Naive thymus-derived CD4-positive, alpha-beta T cell (primary cell): ENCODE measurements at regions of chr2 and their contacts with region 1.

Region 1: GRCh38 chr2:119243621-119244020 is 20.0 kb downstream of the STEAP3 start:
- DNase-seq: no peak
- ATAC-seq: no peak
- H3K4me3 ChIP-seq: no peak overlapping the region
- H3K4me3 Mint-ChIP-seq: no peak overlapping the region
- H3K27ac ChIP-seq: no peak overlapping the region
- H3K27ac Mint-ChIP-seq: no peak overlapping the region
- H3K4me1 ChIP-seq: no peaks in the 10 kb centered on the region
- H3K4me1 Mint-ChIP-seq: no peaks in the 10 kb centered on the region
- H3K27me3 ChIP-seq: no peaks in the 10 kb centered on the region
- H3K27me3 Mint-ChIP-seq: peaks cover 0 to 6% (median 0%) of the 10 kb centered on the region in 5 donors

Region 2: GRCh38 chr2:119255760-119256581 is 12.3 kb after region 1 on chr2:
- CTCF ChIA-PET with region 1: no interaction called
- POLR2A ChIA-PET with region 1: no interaction called
- intact Hi-C with region 1: no loop called
- DNase-seq: no peak
- ATAC-seq: no peak
- H3K4me3 ChIP-seq: no peak overlapping the region
- H3K4me3 Mint-ChIP-seq: no peak overlapping the region
- H3K27ac ChIP-seq: no peak overlapping the region
- H3K27ac Mint-ChIP-seq: no peak overlapping the region
- H3K4me1 ChIP-seq: no peaks in the 10 kb centered on the region
- H3K4me1 Mint-ChIP-seq: no peaks in the 10 kb centered on the region
- H3K27me3 ChIP-seq: no peaks in the 10 kb centered on the region
- H3K27me3 Mint-ChIP-seq: peaks cover 0 to 6% (median 0%) of the 10 kb centered on the region in 5 donors

Region 3: DNA sequence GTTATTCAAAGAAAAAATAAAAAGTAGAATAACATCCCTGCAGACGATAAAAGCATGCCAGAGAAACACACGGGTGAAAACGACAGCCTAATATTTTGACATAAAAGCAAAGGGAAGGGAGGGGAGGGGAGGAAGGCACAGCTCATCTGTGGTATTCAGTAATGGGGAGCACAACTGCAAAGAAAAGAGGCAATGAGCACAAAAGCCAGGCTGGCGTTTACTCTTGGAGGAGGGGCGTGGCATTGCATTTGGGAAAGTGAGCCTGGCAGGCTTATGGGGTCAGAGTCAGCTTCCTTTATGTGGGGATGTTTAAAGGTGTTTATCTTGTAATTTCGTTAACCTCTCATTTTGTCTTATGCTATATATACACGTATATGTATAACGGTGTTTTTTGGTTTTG is 33.2 kb after region 1 on chr2:
- CTCF ChIA-PET with region 1: no interaction called
- POLR2A ChIA-PET with region 1: interaction called, 12 read pairs
- intact Hi-C with region 1: no loop called
- DNase-seq: no peak
- ATAC-seq: no peak
- H3K4me3 ChIP-seq: no peak overlapping the region
- H3K4me3 Mint-ChIP-seq: no peak overlapping the region
- H3K27ac ChIP-seq: no peak overlapping the region
- H3K27ac Mint-ChIP-seq: no peak overlapping the region
- H3K4me1 ChIP-seq: no peaks in the 10 kb centered on the region
- H3K4me1 Mint-ChIP-seq: no peaks in the 10 kb centered on the region
- H3K27me3 ChIP-seq: no peaks in the 10 kb centered on the region
- H3K27me3 Mint-ChIP-seq: no peaks in the 10 kb centered on the region